ENCODE measurements at regions of chrX and their contacts with region 1.

Region 1: GRCh38 chrX:54639346-54640102 is 109.5 kb downstream of the GNL3L start:
- DNase-seq: peak; percentile 96
- H3K4me3 Mint-ChIP-seq: peak overlapping the region; percentile 97
- H3K27ac Mint-ChIP-seq: peak overlapping the region; percentile 100
- H3K4me1 Mint-ChIP-seq: peaks cover 7% of the 10 kb centered on the region
- H3K27me3 Mint-ChIP-seq: no peaks in the 10 kb centered on the region

Region 2: GRCh38 chrX:54182864-54183608 is 456.5 kb before region 1 on chrX and contains the start of gene FAM120C:
- intact Hi-C with region 1: loop called (anchors 1 kb)
- DNase-seq: peak; percentile 84
- H3K4me3 Mint-ChIP-seq: peak within 1 kb of the TSS; percentile 88
- H3K27ac Mint-ChIP-seq: peak within 1 kb of the TSS; percentile 92
- H3K4me1 Mint-ChIP-seq: peaks cover 37% of the 10 kb centered on the region
- H3K27me3 Mint-ChIP-seq: no peaks in the 10 kb centered on the region
- total RNA-seq, gene FAM120C: 10.8 and 11.4 TPM in 2 replicates

Region 3: GRCh38 chrX:54473993-54474859 is 165.3 kb before region 1 on chrX:
- intact Hi-C with region 1: no loop called
- DNase-seq: no peak
- H3K4me3 Mint-ChIP-seq: no peak overlapping the region
- H3K27ac Mint-ChIP-seq: no peak overlapping the region
- H3K4me1 Mint-ChIP-seq: no peaks in the 10 kb centered on the region
- H3K27me3 Mint-ChIP-seq: no peaks in the 10 kb centered on the region

Region 4: GRCh38 chrX:54808605-54809483 is 169.3 kb after region 1 on chrX:
- intact Hi-C with region 1: loop called (anchors 2 kb)
- DNase-seq: peak; percentile 96
- H3K4me3 Mint-ChIP-seq: peak overlapping the region; percentile 95
- H3K27ac Mint-ChIP-seq: peak overlapping the region; percentile 92
- H3K4me1 Mint-ChIP-seq: peaks cover 18% of the 10 kb centered on the region
- H3K27me3 Mint-ChIP-seq: peaks cover 20% of the 10 kb centered on the region

Region 5: GRCh38 chrX:55057675-55058249 is 418.2 kb after region 1 on chrX:
- intact Hi-C with region 1: loop called (anchors 2 kb)
- DNase-seq: peak; percentile 72
- H3K4me3 Mint-ChIP-seq: peak overlapping the region; percentile 74
- H3K27ac Mint-ChIP-seq: no peak overlapping the region
- H3K4me1 Mint-ChIP-seq: peaks cover 10% of the 10 kb centered on the region
- H3K27me3 Mint-ChIP-seq: no peaks in the 10 kb centered on the region

Measured in activated CD4-positive, alpha-beta T cell treated with anti-CD3 and anti-CD28 coated beads, Interleukin-2, amount 10 ng/mL, durations not matched to agents 24 days and 14 days (primary cell).